Activated CD4-positive, alpha-beta memory T cell treated with anti-CD3 and anti-CD28 coated beads for 36 hours (primary cell): ENCODE measurements at regions of chr7 and their contacts with region 1.

Region 1: DNA sequence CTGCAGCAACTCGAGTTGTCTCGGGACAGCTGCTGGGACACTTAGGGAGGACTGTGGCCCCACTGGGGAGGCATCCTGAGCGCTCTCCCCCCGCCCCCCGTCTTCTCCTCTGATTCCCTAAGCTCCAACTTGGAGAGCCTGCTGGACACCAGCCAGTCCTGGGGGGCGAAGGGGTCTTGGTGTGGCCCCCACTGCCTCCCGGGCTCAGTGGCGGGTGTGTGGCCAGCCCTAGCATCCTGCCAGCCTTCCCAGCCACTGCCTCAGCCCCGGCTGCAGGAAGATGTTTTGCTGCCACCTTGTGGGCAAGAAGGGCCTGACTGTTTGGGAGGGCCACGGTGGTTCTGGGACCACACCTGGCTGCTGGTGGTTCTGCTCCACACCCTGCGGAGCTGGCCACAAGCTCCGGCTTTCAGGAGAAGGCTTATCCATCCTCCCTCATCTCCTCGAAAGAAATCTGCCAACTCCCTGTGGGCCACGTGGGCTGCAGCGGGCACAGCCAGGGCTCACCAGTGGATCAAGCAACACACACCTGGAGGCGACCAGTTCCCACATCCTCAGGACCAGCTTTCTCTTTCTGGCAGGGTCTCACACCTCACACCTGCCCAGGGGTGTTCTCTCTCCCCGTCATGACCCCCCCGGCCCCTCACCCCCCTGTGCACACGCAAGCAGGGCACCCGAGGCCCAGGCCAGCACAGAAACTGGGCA is 24.8 kb downstream of the AGAP3 start:
- DNase-seq: peak; percentile 83
- H3K4me3 Mint-ChIP-seq: no peak overlapping the region
- H3K27ac Mint-ChIP-seq: no peak overlapping the region
- H3K4me1 Mint-ChIP-seq: peaks cover 4% of the 10 kb centered on the region
- H3K27me3 Mint-ChIP-seq: peaks cover 5% of the 10 kb centered on the region

Region 2: GRCh38 chr7:150962553-150963399 is 148.3 kb before region 1 on chr7:
- CTCF ChIA-PET with region 1: interaction called, 20 read pairs
- POLR2A ChIA-PET with region 1: no interaction called
- intact Hi-C with region 1: loop called (anchors 5 kb)
- DNase-seq: peak; percentile 66
- H3K4me3 Mint-ChIP-seq: no peak overlapping the region
- H3K27ac Mint-ChIP-seq: no peak overlapping the region
- H3K4me1 Mint-ChIP-seq: peaks cover 6% of the 10 kb centered on the region
- H3K27me3 Mint-ChIP-seq: peaks cover 20% of the 10 kb centered on the region

Region 3: DNA sequence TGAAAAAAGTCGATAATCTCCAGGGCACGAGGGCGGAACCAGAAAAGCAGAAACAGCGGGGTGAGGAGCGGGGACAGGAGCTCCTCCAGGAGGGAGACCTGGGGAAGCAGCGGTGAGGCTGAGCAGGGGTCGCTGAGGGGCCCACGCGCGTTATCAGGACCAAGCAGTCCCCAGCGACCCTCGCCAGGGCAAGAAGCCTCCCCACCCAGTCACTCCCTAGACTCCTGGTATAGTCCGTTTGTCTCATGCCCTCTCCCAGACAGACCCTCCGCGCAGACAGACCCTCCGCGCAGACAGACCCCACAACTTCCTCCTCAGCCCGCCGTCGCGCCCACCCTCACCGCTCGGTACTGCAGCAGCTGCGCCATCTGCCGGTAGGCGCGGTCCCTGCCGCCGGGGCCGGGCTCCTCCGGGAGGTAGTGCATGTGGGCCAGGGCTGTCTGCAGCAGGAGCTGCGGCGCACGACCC is 93.1 kb before region 1 on chr7:
- CTCF ChIA-PET with region 1: interaction called, 11 read pairs
- POLR2A ChIA-PET with region 1: no interaction called
- intact Hi-C with region 1: no loop called
- DNase-seq: peak; percentile 86
- H3K4me3 Mint-ChIP-seq: peak overlapping the region; percentile 63
- H3K27ac Mint-ChIP-seq: no peak overlapping the region
- H3K4me1 Mint-ChIP-seq: peaks cover 47% of the 10 kb centered on the region
- H3K27me3 Mint-ChIP-seq: peaks cover 11% of the 10 kb centered on the region

Region 4: DNA sequence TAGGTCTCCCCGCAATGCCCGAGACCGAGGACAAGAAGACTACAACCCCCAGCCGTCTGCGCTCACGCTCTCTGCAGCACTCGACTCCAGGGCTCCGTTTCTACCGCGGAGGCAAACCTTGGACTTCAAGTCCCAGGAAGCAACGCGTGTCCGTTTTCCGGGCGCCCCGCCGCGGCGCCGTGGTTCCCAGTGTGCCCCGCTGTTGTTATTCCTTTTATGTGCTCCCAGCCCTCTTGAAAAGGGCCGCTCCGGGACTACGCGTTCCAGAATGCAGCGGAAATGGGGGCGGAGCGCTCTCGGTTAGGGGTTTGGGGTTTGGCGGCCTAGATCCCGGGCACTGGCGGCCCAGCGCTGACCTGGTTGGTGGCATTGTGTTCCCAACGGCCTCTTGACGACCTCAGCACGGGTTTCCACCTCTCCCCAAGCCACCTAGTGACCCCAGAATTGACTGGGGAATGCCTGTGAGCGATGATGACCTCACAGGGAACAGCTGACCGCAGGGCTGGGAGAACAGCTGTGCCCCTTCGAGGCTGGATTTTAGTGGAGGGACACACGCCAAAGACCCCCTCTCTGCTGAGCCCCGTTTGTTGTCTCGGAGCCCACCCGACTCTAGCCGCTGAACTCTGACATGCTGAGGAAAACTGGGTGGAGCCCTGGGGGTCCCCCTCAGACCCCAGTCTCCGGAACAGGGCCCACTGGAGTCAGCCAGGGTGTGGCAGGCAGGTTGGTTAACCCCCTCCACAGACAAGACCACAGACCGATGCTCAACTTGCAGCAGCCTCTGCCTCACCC is 52.9 kb before region 1 on chr7:
- CTCF ChIA-PET with region 1: interaction called, 13 read pairs
- POLR2A ChIA-PET with region 1: no interaction called
- intact Hi-C with region 1: no loop called
- DNase-seq: peak; percentile 98
- H3K4me3 Mint-ChIP-seq: peak overlapping the region; percentile 89
- H3K27ac Mint-ChIP-seq: peak overlapping the region; percentile 89
- H3K4me1 Mint-ChIP-seq: peaks cover 25% of the 10 kb centered on the region
- H3K27me3 Mint-ChIP-seq: no peaks in the 10 kb centered on the region

Region 5: DNA sequence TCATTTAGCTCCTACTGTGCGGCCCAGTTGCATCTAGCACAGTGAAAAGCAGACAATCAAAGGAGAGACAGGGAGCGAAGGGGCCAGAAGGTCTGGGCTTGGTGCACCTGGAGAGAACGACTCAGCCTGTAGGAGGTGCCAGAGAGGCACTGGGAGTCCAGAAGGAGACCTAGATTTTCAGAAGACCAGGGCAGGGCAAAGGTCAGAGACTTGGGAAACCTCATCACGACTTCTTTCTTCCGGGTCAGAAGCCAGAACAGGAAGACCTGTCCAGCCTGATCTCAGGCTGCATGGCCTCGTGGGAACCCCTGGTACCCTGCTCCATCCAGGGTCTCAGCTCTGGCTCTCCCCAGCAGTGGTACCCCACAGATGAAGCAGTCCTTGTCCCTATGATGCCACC is 19.7 kb before region 1 on chr7:
- CTCF ChIA-PET with region 1: interaction called, 15 read pairs
- POLR2A ChIA-PET with region 1: no interaction called
- intact Hi-C with region 1: loop called (anchors 1 kb)
- DNase-seq: peak; percentile 53
- H3K4me3 Mint-ChIP-seq: no peak overlapping the region
- H3K27ac Mint-ChIP-seq: no peak overlapping the region
- H3K4me1 Mint-ChIP-seq: peaks cover 28% of the 10 kb centered on the region
- H3K27me3 Mint-ChIP-seq: no peaks in the 10 kb centered on the region

Region 6: GRCh38 chr7:151226875-151227782 is 116.0 kb after region 1 on chr7 and contains the start of gene ABCF2:
- CTCF ChIA-PET with region 1: no interaction called
- POLR2A ChIA-PET with region 1: no interaction called
- intact Hi-C with region 1: loop called (anchors 5 kb)
- DNase-seq: peak; percentile 99
- H3K4me3 Mint-ChIP-seq: peak within 1 kb of the TSS; percentile 99
- H3K27ac Mint-ChIP-seq: peak within 1 kb of the TSS; percentile 89
- H3K4me1 Mint-ChIP-seq: peaks cover 47% of the 10 kb centered on the region
- H3K27me3 Mint-ChIP-seq: no peaks in the 10 kb centered on the region
- total RNA-seq, gene ABCF2: 41.1 to 41.2 TPM

Region 7: GRCh38 chr7:152292898-152293297 is 1181.8 kb after region 1 on chr7:
- CTCF ChIA-PET with region 1: no interaction called
- POLR2A ChIA-PET with region 1: no interaction called
- intact Hi-C with region 1: no loop called
- DNase-seq: no peak
- H3K4me3 Mint-ChIP-seq: no peak overlapping the region
- H3K27ac Mint-ChIP-seq: no peak overlapping the region
- H3K4me1 Mint-ChIP-seq: no peaks in the 10 kb centered on the region
- H3K27me3 Mint-ChIP-seq: no peaks in the 10 kb centered on the region